Activated CD8-positive, alpha-beta memory T cell treated with anti-CD3 and anti-CD28 coated beads, Interleukin-2, amount 10 ng/mL, durations not matched to agents 7 days and 5 days (primary cell): ENCODE measurements at regions of chr1 and their contacts with region 1.

Region 1: DNA sequence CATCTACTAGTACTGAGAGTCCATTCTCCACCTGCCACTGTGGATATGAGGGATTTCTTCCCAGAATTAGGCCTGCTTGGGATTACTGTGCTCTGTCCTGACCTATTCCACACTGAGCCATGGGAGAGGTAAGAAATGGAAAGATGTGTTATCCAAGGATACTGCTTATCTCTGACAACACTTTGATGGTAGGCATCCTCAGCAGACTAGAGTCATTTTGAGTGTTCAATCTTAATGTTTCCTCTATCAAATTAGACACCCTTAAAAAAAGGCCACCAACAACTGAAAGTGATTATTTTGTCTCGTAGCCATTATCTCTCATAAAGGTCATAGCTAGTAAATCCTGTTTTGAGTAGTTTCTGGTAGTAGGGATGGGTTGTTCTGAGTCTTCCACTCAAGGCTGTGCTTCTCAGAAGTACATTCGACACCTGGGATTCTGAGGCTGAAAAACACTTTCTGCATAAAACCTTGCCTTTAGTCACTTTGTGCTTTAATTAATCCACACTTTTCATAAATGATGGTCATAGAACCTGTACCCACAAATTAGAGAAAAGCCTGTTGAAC is 8.8 kb downstream of the ATPAF1 start:
- DNase-seq: no peak
- ATAC-seq: peak; percentile 42
- H3K4me3 Mint-ChIP-seq: no peak overlapping the region
- H3K27ac Mint-ChIP-seq: peak overlapping the region; percentile 66
- H3K4me1 Mint-ChIP-seq: peaks cover 29% of the 10 kb centered on the region
- H3K27me3 Mint-ChIP-seq: no peaks in the 10 kb centered on the region

Region 2: GRCh38 chr1:46630719-46631118 is 28.7 kb before region 1 on chr1:
- CTCF ChIA-PET with region 1: no interaction called
- DNase-seq: no peak
- ATAC-seq: no peak
- H3K4me3 Mint-ChIP-seq: no peak overlapping the region
- H3K27ac Mint-ChIP-seq: no peak overlapping the region
- H3K4me1 Mint-ChIP-seq: no peaks in the 10 kb centered on the region
- H3K27me3 Mint-ChIP-seq: no peaks in the 10 kb centered on the region

Region 3: GRCh38 chr1:46675549-46676314 is 16.3 kb after region 1 on chr1:
- CTCF ChIA-PET with region 1: interaction called, 10 read pairs
- DNase-seq: no peak
- ATAC-seq: peak; percentile 91
- H3K4me3 Mint-ChIP-seq: peak overlapping the region; percentile 34
- H3K27ac Mint-ChIP-seq: peak overlapping the region; percentile 94
- H3K4me1 Mint-ChIP-seq: peaks cover 39% of the 10 kb centered on the region
- H3K27me3 Mint-ChIP-seq: no peaks in the 10 kb centered on the region